Psoas muscle (tissue), 8 donors: ENCODE measurements at regions of chr2 and their contacts with region 1.

Region 1: DNA sequence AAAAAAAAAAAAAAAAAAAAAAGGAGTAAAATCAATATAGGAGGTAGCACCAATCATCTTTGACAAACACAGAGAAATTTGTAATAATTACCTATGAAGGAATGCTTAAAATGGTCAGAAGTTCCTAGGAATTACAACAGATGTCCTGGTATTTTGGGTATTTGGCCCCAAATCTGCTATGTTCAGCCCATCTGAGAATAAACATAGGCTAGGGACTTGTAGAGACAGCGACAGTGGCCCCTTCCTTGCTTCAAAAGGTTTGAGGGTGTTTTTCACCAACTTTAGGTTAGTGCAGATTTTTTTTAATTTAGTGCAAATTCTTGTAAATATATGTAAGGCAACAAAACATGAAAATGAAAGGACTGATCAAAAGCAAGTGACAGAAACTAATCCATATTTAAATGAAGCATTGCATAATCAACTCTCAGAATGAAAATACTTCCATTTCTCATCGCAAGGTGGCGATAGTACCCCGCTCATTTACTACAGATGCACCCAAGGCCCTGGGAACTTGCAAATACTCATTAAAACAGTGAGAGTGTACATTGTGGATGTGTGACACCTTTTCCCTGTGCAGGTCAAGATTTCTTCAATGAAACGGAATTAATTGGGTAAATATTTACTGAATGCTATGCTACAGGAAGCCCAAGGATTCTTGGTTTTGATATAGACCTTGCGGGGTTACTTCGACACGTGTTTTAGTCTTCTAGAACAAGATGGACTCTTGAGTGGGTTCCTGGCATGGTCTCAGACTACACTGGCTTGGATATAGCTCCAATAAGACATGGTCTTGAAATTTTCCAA is 44.6 kb downstream of the FAM124B start:
- DNase-seq: no peak
- ATAC-seq: peak; percentile 63 to 90 (median 71)
- H3K4me3 ChIP-seq: no peak overlapping the region
- H3K27ac ChIP-seq: no peak overlapping the region
- H3K4me1 ChIP-seq: no peaks in the 10 kb centered on the region
- H3K27me3 ChIP-seq: no peaks in the 10 kb centered on the region
- CTCF ChIP-seq: peak; percentile 88

Region 2: DNA sequence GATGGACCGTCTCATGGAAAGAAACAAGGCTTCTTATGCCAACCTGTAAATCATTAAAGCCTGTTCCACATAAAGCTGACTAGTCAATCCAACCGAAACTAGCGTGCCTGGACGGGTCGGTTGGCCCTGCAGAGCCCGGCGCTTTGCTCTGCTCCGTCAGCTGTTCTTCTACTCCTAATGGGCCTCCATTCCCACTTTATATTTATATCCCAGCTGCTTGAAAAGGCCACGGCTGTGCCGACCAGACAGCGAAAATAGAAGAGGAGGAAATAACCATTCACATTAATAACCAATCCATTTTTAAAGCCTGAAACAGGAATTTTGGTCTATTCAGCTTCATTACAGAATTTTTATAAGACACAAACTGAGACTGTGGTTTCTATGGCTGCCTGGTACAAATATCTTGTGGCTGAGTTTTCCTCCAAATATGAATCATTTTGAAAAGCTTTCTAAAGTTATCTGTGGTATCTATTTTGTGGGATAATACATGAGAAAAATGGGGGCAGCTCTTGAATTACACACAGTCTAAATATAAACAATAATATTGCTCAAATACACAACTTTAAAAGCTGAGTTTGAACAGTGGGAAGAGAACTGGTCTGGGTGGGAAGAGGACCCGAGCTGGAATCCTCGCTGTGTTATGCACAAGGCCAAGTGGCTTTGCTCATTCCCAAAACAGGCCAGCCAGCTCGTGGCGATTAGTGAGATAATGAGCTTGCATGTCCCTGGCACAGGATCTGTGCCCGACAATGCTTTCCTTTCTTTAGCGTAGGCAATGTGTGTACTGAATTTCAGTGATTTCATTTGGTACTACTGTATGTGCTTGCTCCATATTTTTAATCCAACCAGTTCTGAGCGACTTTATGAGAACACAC is 55.1 kb after region 1 on chr2:
- intact Hi-C with region 1: no loop called
- DNase-seq: peak in 1 of 2 donors; percentile 66
- ATAC-seq: peak; percentile 65 to 93 (median 87)
- H3K4me3 ChIP-seq: peak overlapping the region; percentile 29
- H3K27ac ChIP-seq: peak overlapping the region; percentile 64
- H3K4me1 ChIP-seq: peaks cover 9% of the 10 kb centered on the region
- H3K27me3 ChIP-seq: no peaks in the 10 kb centered on the region
- CTCF ChIP-seq: no peak

Region 3: DNA sequence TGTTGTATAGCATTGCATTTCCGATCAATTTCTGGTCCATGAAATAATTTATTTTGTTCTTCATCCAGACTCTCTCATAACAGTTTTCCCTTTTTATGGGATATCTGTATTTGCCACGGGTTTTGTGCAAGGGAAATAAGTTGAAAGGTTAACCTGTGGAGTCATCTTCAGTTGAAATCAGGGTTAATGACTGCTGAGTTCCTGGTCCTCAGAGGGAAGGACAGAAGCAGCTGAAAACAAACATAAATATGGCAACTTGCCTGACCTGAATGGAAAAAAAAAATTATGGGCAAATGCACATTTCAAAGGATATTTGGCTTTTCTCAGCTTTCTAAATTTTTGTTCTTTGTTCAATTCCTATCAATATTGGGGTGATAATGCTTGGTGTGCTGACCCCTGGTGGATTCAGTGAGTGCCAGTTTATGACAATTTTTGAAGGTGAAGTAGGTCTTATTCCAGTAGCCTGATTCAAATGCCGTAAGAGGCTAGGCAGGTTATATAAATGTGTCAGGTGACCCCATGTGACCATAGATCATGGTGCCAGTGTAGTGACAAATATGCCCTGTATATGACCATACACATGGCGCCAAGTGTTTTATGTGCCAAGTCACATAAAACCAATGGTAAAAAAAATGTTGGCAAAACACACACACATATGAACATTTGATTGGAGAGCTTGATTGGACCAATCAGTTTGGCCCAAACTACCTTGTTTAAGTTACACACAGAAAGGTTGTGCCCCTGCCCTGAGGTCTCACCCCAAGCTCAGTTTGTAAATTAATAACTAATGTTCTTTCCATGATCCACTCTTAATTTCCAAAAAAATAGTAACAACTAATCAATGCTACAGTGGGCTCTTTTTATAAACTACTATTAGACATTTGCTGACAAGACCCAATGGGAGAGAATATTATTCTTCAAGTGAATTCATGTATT is 92.2 kb after region 1 on chr2:
- intact Hi-C with region 1: loop called in 1 of 2 experiments (anchors 1 kb)
- DNase-seq: no peak
- ATAC-seq: peak in 1 of 4 donors; percentile 54
- H3K4me3 ChIP-seq: no peak overlapping the region
- H3K27ac ChIP-seq: no peak overlapping the region
- H3K4me1 ChIP-seq: no peaks in the 10 kb centered on the region
- H3K27me3 ChIP-seq: peaks cover 0 to 2% (median under 1%) of the 10 kb centered on the region in 3 donors
- CTCF ChIP-seq: peak; percentile 57

Region 4: DNA sequence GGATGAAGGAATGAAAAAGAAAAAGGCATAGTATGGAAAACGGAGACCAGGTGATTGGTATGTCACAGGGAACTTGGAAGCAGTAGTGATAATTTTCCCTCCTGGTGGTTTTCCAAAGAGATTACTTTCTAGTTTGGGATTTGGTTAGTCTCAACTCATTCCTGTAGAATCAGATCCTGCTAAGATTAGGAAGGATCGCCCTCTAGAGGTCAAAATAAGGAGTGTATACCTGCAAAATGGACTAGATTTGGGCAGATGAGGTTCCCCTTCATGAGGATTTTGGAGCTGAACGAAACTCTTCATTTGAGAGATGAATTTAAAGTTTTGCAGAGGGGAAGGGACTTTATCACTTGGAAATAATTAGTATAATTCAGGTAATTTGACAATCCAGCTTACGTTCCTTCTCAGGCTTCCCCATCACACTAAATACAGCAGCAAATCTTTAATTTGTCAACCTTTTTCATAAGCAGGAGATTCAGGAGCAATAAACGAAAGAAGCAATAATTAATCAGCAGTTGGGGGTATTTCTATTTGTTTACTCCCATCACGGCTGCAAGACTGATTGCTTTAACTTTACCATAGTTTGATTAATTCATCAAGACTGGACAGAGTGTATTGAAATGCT is 293.6 kb after region 1 on chr2:
- intact Hi-C with region 1: loop called (anchors 1 to 2 kb)
- DNase-seq: no peak
- ATAC-seq: peak in 3 of 4 donors; percentile 56 to 80 (median 64)
- H3K4me3 ChIP-seq: no peak overlapping the region
- H3K27ac ChIP-seq: no peak overlapping the region
- H3K4me1 ChIP-seq: no peaks in the 10 kb centered on the region
- H3K27me3 ChIP-seq: no peaks in the 10 kb centered on the region
- CTCF ChIP-seq: peak; percentile 85

Region 5: DNA sequence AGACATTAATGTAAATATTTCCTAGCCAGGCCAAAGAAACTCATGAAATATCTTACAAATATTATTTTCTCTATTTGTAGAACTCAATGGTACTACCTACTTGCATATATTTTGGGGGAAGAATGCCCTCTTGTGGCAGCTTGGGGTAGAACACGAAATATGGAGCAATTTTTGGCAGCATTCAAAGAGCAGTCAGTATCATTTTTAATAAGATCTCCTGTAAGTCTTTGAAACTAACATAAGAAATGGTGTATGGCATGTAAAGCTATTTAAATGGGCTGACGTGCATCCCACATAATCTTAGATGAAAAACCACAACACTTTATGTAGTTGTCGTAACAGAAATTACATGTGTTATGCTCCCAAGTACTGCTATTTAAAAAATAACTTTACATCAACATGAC is 421.2 kb after region 1 on chr2:
- intact Hi-C with region 1: loop called (anchors 5 to 10 kb)
- DNase-seq: no peak
- ATAC-seq: peak in 1 of 4 donors; percentile 69
- H3K4me3 ChIP-seq: no peak overlapping the region
- H3K27ac ChIP-seq: no peak overlapping the region
- H3K4me1 ChIP-seq: no peaks in the 10 kb centered on the region
- H3K27me3 ChIP-seq: no peaks in the 10 kb centered on the region
- CTCF ChIP-seq: peak; percentile 73